Dorsolateral prefrontal cortex (tissue), 120 donors: ENCODE measurements at regions of chr6 and their contacts with region 1.

Region 1: DNA sequence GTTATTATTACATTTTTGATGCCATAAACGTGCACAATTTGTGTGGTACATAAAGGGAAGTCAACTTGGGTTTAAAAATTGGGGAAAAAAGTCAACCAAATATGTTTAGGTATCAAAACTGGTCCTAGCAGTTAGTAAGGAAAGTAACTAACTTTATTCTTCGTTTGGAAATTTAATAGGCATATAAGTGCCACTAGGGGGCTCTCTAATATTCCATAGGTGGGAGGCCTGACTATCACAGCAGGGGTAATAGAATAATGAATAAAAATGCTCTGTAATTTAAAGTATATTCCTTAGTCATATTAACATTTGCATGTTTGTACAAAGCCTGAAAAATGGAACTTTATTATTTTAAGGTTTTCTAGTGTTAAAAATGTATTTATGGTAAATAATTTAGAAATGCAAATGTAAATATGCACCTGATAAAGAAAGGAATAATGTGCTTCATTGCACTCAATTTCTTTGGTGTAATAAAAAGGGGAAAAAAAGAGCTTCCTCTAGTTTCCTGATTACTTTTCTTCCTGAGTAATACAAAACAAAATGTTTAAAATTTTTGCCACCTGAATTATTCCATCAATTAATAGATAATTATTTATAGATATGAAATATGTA is 125.7 kb upstream of the HDAC2 start:
- DNase-seq: no peak
- H3K4me3 ChIP-seq: no peak overlapping the region
- H3K27ac ChIP-seq: peak overlapping the region in 10 of 59 donors; percentile 13 to 66 (median 35)
- H3K27me3 ChIP-seq: no peaks in the 10 kb centered on the region
- CTCF ChIP-seq: peak; percentile 57 to 97 (median 82)

Region 2: GRCh38 chr6:114304304-114304887 is 207.7 kb after region 1 on chr6:
- intact Hi-C with region 1: loop called in 1 of 2 experiments (anchors 5 kb)
- DNase-seq: no peak
- H3K4me3 ChIP-seq: no peak overlapping the region
- H3K27ac ChIP-seq: peak overlapping the region in 6 of 59 donors; percentile 10 to 57 (median 15)
- H3K27me3 ChIP-seq: no peaks in the 10 kb centered on the region
- CTCF ChIP-seq: peak; percentile 45 to 81 (median 66)

Region 3: DNA sequence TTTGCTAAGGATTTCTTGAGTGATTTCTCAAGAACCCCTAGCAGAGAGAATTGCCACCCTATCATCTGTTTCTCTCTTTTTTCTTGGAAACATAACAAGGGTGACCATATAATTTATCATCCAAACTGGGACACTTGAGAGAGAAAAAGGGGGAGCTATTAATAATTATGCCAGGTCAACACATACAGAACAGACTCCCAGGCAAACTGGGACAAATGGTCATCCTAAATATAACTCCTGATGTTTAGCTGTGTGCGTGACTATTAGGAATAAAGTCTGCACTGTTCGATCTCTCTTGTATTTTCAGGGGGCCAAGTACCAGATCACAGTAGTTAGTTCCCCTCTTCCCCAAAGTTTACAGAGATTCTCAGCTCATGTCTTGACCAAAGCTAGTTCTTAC is 257.8 kb after region 1 on chr6:
- intact Hi-C with region 1: no loop called
- DNase-seq: no peak
- H3K4me3 ChIP-seq: no peak overlapping the region
- H3K27ac ChIP-seq: no peak overlapping the region
- H3K27me3 ChIP-seq: no peaks in the 10 kb centered on the region
- CTCF ChIP-seq: no peak

Region 4: GRCh38 chr6:114569669-114570068 is 473.0 kb after region 1 on chr6:
- intact Hi-C with region 1: no loop called
- DNase-seq: no peak
- H3K4me3 ChIP-seq: no peak overlapping the region
- H3K27ac ChIP-seq: no peak overlapping the region
- H3K27me3 ChIP-seq: no peaks in the 10 kb centered on the region
- CTCF ChIP-seq: no peak